Activated naive CD4-positive, alpha-beta T cell treated with anti-CD3 and anti-CD28 coated beads for 36 hours (primary cell): ENCODE measurements at regions of chr13 and their contacts with region 1.

Region 1: DNA sequence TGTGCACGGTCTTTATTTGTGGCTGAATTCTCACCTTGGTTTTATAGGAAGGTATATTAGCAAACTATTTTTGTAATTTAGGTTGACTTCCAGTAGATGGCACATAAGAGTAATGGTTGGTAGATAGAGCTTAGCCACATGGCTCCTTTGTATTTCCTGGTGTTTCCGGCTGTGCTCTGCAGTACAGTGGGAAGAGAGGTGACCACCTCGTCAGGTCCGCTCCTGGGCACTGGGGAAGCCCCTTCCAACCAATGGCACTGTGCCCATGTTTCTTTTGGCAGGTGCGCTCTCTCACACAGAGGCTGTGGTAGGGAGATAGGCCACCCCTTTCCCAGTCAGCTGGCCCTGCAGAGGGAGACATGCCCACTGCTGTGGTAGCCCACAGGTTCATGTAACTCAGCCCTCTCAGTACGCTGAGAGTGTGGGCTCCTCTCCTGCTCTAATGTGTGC is 74.3 kb upstream of the ATP12A start:
- DNase-seq: no peak
- H3K4me3 Mint-ChIP-seq: no peak overlapping the region
- H3K27ac Mint-ChIP-seq: no peak overlapping the region
- H3K4me1 Mint-ChIP-seq: peaks cover 22% of the 10 kb centered on the region
- H3K27me3 Mint-ChIP-seq: peaks cover 13% of the 10 kb centered on the region

Region 2: DNA sequence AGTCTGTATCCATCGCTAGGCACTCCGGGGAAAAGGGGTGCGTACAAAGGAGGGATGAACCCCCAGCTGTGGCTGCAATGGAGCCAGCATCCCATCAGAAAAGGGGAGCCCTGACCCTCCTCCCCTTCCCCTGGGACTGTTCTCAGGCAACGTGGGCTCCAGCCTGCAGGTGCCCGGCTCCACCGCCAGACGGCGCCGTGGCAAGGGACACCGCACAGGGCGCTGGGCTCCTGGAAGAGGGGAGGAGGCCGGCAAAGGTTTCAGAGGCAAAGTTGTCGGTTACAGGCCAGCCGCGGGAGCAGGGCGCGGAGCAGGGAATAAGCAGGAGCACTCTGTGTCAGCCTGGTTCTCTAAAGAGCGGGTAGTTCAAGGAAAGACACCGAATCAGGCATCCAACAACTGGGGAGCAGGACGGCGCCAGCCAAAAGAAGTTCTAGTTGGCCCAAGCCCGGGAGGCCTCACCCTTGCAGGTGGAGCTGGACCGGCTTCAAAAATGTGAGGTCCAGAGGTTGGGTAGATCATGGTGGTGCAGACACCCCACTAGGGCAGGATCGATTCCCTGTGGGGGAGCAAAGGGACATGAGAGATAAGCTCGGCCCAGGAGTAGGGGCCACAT is 21.3 kb after region 1 on chr13:
- CTCF ChIA-PET with region 1: interaction called, 12 read pairs
- intact Hi-C with region 1: no loop called
- DNase-seq: no peak
- H3K4me3 Mint-ChIP-seq: no peak overlapping the region
- H3K27ac Mint-ChIP-seq: no peak overlapping the region
- H3K4me1 Mint-ChIP-seq: peaks cover 36% of the 10 kb centered on the region
- H3K27me3 Mint-ChIP-seq: no peaks in the 10 kb centered on the region

Region 3: DNA sequence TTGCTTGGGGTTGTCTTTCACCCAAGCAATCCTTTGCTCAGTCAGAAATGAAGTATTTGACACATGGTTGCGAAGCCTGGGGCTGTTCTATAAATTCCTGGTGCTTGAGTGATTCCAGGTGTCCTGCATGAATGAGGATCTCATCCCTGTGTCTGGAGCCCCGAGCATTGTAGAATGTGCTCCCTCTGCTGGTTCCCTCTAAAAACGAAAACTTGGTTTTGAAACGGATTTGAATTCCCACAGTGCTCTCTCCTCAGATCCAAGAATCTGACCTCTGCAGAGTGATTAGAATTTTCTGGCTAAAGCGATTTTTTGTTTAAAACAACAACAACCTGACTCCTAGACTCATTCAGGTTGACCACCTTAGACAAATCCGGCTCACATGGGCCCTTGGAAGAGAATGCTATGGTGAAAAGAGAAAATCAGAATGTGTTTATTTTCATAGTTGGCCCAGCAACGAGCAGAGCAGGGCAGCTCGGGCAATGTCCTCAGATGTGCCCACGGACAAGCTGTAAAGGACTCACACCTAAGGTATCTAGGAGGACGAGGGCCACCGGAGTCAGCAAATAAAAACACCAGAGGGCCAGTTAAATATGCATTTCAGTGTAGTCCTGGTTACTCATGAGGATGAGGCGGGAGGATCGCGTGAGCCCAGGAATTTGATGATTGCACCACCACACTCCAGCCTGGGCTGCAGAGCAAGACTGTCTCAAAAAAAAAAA is 65.6 kb after region 1 on chr13:
- CTCF ChIA-PET with region 1: interaction called, 25 read pairs
- intact Hi-C with region 1: loop called (anchors 1 kb)
- DNase-seq: no peak
- H3K4me3 Mint-ChIP-seq: no peak overlapping the region
- H3K27ac Mint-ChIP-seq: no peak overlapping the region
- H3K4me1 Mint-ChIP-seq: peaks cover 10% of the 10 kb centered on the region
- H3K27me3 Mint-ChIP-seq: peaks cover 29% of the 10 kb centered on the region

Region 4: GRCh38 chr13:24683838-24684599 is 78.1 kb after region 1 on chr13:
- CTCF ChIA-PET with region 1: interaction called, 10 read pairs
- intact Hi-C with region 1: no loop called
- DNase-seq: peak; percentile 77
- H3K4me3 Mint-ChIP-seq: no peak overlapping the region
- H3K27ac Mint-ChIP-seq: peak overlapping the region; percentile 44
- H3K4me1 Mint-ChIP-seq: peaks cover 31% of the 10 kb centered on the region
- H3K27me3 Mint-ChIP-seq: peaks cover 40% of the 10 kb centered on the region